ENCODE measurements at regions of chr11 and their contacts with region 1.

Region 1: DNA sequence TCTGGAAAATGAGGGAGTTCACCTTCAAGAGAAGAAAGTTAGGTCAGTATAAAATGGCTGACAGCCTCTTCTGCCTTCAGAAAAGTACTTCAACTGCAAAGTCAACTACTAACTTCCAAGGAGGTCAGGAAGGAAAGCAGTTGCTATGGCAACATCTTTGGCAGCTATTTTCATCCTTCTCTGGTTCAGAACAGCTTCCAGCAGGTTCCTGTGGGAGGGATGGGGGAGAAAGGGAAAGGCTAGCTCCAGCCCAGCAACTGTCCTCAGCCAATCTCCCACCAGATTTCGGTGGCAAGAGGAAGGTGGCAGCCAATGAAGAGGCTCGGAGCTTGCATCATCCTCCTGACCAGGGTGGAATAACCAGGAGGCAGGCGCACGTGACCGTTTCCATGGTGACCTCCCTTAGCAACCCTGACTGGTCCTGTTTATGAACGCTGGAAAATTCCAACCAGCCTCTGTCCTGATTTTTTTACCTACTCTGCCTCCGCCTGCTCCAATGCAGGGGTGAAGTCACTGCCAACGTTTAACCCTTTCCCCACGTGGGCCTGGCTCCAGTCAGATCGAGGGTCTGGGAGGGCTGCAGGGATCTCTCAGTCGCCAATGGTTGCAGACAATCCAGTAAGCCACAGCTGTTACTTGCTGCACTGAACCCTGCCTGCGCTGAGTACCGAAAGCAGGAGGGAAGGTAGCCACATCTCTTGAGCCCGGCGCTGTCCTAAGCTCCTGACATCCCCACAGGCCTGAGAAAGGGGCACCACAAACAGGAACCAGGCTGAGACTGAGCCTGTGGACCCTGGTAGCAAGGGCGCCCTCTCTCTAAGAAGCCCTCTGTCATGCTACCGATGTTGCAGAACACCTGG is 11.2 kb upstream of the MALAT1 start:
- DNase-seq: peak; percentile 66
- H3K4me3 Mint-ChIP-seq: no peak overlapping the region
- H3K27ac Mint-ChIP-seq: peak overlapping the region; percentile 71
- H3K4me1 Mint-ChIP-seq: peaks cover 38% of the 10 kb centered on the region
- H3K27me3 Mint-ChIP-seq: peaks cover 5% of the 10 kb centered on the region

Region 2: GRCh38 chr11:65477149-65477965 is 10.3 kb before region 1 on chr11:
- CTCF ChIA-PET with region 1: interaction called, 119 read pairs
- POLR2A ChIA-PET with region 1: interaction called, 3 read pairs
- DNase-seq: peak; percentile 88
- H3K4me3 Mint-ChIP-seq: peak overlapping the region; percentile 88
- H3K27ac Mint-ChIP-seq: peak overlapping the region; percentile 99
- H3K4me1 Mint-ChIP-seq: peaks cover 25% of the 10 kb centered on the region
- H3K27me3 Mint-ChIP-seq: peaks cover 4% of the 10 kb centered on the region

Region 3: DNA sequence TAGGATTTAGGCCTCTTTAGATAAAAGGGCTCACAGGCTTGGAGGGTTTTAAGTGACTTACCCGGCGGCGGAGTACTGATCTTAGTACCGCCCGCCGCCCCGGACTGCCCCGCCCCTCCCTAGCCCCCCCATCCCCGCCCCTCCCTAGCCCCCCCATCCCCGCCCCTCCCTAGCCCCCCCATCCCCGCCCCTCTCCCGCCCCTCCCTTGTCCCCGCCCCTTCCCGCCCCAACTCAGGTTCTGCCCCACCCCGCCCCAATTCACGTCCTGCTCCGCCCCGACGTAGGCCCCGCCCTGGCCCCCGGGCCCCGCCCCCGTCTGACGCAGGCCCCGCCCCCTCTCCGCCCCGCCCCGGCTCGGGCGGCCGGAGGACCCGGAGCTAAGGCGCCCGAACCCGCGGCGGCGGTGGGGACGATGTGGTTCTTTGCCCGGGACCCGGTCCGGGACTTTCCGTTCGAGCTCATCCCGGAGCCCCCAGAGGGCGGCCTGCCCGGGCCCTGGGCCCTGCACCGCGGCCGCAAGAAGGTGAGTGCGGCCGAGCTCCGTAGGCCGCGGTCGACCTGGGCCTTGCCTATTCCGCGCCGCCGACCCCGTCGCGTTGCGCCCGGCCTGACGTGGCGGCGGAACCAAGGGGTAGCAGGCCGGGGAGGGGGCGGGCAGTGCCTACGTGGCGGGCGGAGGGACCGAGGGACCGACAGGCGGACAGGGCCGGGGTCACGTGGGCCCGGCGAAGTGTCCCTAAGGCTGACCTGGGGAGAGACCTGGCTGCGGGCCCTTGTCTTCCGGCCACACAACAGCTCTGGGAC is 37.3 kb after region 1 on chr11 and contains the start of gene SCYL1:
- CTCF ChIA-PET with region 1: no interaction called
- POLR2A ChIA-PET with region 1: no interaction called
- DNase-seq: peak; percentile 78
- H3K4me3 Mint-ChIP-seq: peak within 1 kb of the TSS; percentile 81
- H3K27ac Mint-ChIP-seq: peak within 1 kb of the TSS; percentile 92
- H3K4me1 Mint-ChIP-seq: peaks cover 63% of the 10 kb centered on the region
- H3K27me3 Mint-ChIP-seq: no peaks in the 10 kb centered on the region
- total RNA-seq, gene SCYL1: 59.1 to 62.1 TPM

Measured in activated CD4-positive, alpha-beta T cell treated with anti-CD3 and anti-CD28 coated beads, Interleukin-2, amount 10 ng/mL, durations not matched to agents 7 days and 5 days (primary cell).